B cell (primary cell): ENCODE measurements at regions of chr7 and their contacts with region 1.

Region 1: GRCh38 chr7:106285051-106285854 is 470 bp upstream of the NAMPT start:
- DNase-seq: peak; percentile 100
- ATAC-seq: peak; percentile 87
- H3K4me3 ChIP-seq: peak overlapping the region; percentile 79 to 100 (median 89)
- H3K4me3 Mint-ChIP-seq: peak overlapping the region; percentile 97
- H3K27ac ChIP-seq: peak overlapping the region; percentile 84 to 87
- H3K27ac Mint-ChIP-seq: peak overlapping the region; percentile 98
- H3K4me1 ChIP-seq: peaks cover 10 to 20% of the 10 kb centered on the region in 2 donors
- H3K4me1 Mint-ChIP-seq: peaks cover 31% of the 10 kb centered on the region
- H3K27me3 ChIP-seq: no peaks in the 10 kb centered on the region
- H3K27me3 Mint-ChIP-seq: no peaks in the 10 kb centered on the region
- CTCF ChIP-seq: no peak

Region 2: GRCh38 chr7:105678811-105679495 is 606.3 kb before region 1 on chr7:
- CTCF ChIA-PET with region 1: no interaction called
- POLR2A ChIA-PET with region 1: no interaction called
- intact Hi-C with region 1: loop called (anchors 5 kb)
- DNase-seq: peak; percentile 70
- ATAC-seq: peak; percentile 44
- H3K4me3 ChIP-seq: peak overlapping the region; percentile 48 to 82 (median 65)
- H3K4me3 Mint-ChIP-seq: peak overlapping the region; percentile 96
- H3K27ac ChIP-seq: peak overlapping the region; percentile 56 to 70
- H3K27ac Mint-ChIP-seq: peak overlapping the region; percentile 94
- H3K4me1 ChIP-seq: peaks cover 37 to 45% of the 10 kb centered on the region in 2 donors
- H3K4me1 Mint-ChIP-seq: peaks cover 57% of the 10 kb centered on the region
- H3K27me3 ChIP-seq: no peaks in the 10 kb centered on the region
- H3K27me3 Mint-ChIP-seq: no peaks in the 10 kb centered on the region
- CTCF ChIP-seq: no peak

Region 3: DNA sequence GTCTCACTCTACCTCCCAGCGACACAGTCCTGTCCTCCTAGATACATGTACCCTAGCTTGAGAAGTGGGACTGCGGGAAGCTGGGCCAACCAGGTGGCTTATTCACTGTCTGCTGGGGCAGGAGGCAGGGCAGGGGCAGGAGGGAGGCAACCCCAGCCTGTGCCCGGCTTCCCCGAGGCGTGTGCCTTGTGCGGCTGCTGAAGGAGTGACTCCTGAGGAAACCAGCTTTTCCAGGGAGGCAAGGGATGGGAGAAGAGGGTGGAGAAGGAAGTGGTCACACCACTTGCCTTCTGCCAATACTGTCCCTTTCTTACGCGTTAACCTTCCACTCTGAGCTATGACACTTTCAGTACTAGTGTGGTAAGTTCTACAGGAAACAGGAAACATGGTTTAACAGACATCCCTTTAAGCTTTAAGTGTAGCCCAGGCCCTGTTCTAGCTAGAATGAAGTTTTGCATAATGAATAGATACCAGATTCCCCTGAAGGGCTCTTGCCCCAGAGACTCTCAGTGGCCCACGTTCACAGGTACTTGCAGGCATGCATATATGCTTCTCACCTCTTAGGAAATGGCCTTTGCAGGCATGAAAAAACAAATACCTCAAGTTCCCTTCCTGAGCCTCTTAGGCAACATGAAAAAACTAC is 213.8 kb before region 1 on chr7:
- CTCF ChIA-PET with region 1: no interaction called
- POLR2A ChIA-PET with region 1: no interaction called
- intact Hi-C with region 1: loop called (anchors 2 kb)
- DNase-seq: peak; percentile 90
- ATAC-seq: peak; percentile 87
- H3K4me3 ChIP-seq: peak overlapping the region in 4 of 5 experiments; percentile 33 to 66 (median 45)
- H3K4me3 Mint-ChIP-seq: peak overlapping the region; percentile 85
- H3K27ac ChIP-seq: peak overlapping the region; percentile 95 to 97
- H3K27ac Mint-ChIP-seq: peak overlapping the region; percentile 99
- H3K4me1 ChIP-seq: peaks cover 96 to 100% of the 10 kb centered on the region in 2 donors
- H3K4me1 Mint-ChIP-seq: peaks cover 94% of the 10 kb centered on the region
- H3K27me3 ChIP-seq: no peaks in the 10 kb centered on the region
- H3K27me3 Mint-ChIP-seq: no peaks in the 10 kb centered on the region
- CTCF ChIP-seq: no peak

Region 4: GRCh38 chr7:106329971-106330733 is 44.9 kb after region 1 on chr7:
- CTCF ChIA-PET with region 1: no interaction called
- POLR2A ChIA-PET with region 1: no interaction called
- intact Hi-C with region 1: no loop called
- DNase-seq: no peak
- ATAC-seq: no peak
- H3K4me3 ChIP-seq: no peak overlapping the region
- H3K4me3 Mint-ChIP-seq: no peak overlapping the region
- H3K27ac ChIP-seq: no peak overlapping the region
- H3K27ac Mint-ChIP-seq: no peak overlapping the region
- H3K4me1 ChIP-seq: no peaks in the 10 kb centered on the region
- H3K4me1 Mint-ChIP-seq: no peaks in the 10 kb centered on the region
- H3K27me3 ChIP-seq: no peaks in the 10 kb centered on the region
- H3K27me3 Mint-ChIP-seq: peaks cover 22% of the 10 kb centered on the region
- CTCF ChIP-seq: no peak

Region 5: GRCh38 chr7:106604303-106604923 is 319.2 kb after region 1 on chr7:
- CTCF ChIA-PET with region 1: no interaction called
- POLR2A ChIA-PET with region 1: no interaction called
- intact Hi-C with region 1: loop called (anchors 5 kb)
- DNase-seq: no peak
- ATAC-seq: no peak
- H3K4me3 ChIP-seq: no peak overlapping the region
- H3K4me3 Mint-ChIP-seq: no peak overlapping the region
- H3K27ac ChIP-seq: no peak overlapping the region
- H3K27ac Mint-ChIP-seq: no peak overlapping the region
- H3K4me1 ChIP-seq: no peaks in the 10 kb centered on the region
- H3K4me1 Mint-ChIP-seq: no peaks in the 10 kb centered on the region
- H3K27me3 ChIP-seq: no peaks in the 10 kb centered on the region
- H3K27me3 Mint-ChIP-seq: peaks cover 5% of the 10 kb centered on the region
- CTCF ChIP-seq: no peak